Left cardiac atrium (tissue), 4 donors: ENCODE measurements at regions of chr9 and their contacts with region 1.

Region 1: DNA sequence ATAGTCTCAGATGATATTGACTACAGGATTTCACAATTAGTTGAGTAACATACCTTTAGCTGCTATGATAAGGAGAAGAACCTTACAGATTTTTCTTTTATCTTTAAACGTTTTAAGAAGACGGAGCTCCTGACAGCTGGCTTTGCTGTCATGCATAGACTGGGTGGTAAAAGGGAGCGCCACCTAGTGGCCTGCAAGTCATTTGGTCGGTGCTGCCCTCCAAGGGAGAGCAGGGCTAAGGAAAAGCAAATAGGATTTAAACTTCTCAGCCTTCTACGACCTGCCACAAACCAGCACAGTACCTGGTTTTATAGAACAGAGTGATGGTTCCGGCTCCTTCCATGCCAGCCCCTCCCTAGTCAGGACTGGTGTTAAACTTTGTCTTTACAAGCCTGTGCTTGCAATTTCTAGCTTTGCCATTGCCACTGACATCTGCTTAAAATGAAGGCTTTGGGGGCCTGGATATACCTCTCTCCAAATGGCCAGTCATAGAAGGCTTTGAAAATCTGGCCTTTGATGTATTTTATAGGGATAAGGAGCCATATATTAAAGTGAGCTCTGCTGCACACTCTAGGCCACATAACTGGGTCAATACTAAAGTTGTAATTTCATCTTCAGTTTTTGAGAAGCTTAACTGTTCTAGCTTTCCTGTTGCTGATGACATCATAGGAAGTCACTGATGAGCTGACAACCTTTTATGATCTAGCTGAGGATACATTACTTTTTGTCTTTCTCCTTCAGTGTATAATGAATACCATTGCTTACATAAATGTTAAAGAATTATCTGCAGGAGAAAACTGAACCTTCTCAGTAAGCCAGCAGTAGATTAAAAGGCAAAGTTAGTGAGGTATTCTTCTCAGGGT is 31.1 kb upstream of the ADAMTSL1 start:
- DNase-seq: peak; percentile 82
- ATAC-seq: peak; percentile 56 to 78

Region 2: GRCh38 chr9:18490635-18491370 is 47.9 kb after region 1 on chr9:
- intact Hi-C with region 1: no loop called
- DNase-seq: peak; percentile 52
- ATAC-seq: peak; percentile 65 to 92

Region 3: DNA sequence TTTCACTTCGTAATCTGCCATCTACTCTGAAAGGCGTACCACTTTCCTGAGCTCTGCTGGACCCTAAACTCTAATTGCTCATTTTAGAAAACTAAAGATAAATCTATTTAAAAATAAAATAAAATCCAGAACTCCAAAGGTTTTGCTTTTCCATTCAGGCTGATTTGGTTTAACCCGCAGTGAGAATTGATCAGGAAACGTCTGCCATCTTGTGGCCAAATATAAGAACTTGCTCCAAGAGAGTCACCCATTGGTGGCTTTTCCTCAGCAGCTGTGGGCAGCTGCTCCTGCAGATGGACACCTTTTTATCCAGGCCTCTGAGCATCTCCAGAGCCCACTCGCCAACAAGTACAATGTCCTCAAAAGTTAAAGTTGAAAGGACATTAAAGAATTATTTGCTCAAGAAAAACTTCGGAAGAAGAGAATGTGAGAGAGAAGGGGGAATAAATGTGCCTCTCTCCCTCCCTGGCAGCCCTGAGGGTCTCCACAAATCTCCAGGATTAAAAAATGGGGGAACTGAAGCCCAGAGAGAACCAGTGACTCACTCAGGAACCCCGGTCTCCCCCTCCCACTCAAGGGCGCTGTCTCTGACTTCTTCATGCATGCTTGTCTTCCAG is 586.1 kb after region 1 on chr9:
- intact Hi-C with region 1: loop called in 1 of 2 experiments (anchors 10 kb)
- DNase-seq: no peak
- ATAC-seq: peak; percentile 66 to 70

Region 4: DNA sequence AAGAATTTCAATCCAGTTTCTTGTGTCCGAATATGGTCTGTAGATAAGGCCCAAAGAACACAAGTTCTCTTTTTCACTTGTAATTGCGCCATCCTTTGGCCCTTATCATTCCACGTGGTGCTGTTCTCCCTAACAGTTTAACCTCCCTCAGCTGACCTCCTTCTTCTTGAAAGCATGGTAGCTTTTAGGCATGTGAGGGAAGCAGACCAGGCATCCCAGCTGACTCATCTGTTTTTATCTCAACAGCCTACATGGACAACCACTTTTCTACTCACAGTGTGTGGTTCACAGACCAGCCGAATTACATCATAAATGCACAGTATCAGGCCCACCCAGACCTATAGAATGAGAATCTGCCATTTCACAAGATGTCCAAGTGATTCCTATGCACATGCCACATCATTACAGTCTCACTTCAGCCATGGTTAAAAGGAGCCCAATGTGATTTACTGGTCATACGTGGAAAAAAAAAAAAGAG is 711.3 kb after region 1 on chr9:
- intact Hi-C with region 1: no loop called
- DNase-seq: peak; percentile 66
- ATAC-seq: peak; percentile 86 to 96